Activated CD4-positive, alpha-beta T cell treated with anti-CD3 and anti-CD28 coated beads, Interleukin-2, amount 10 ng/mL, durations not matched to agents 24 days and 14 days (primary cell): ENCODE measurements at regions of chr15 and their contacts with region 1.

Region 1: GRCh38 chr15:67839929-67840748 is at the start of gene RNU6-1:
- DNase-seq: peak; percentile 99
- H3K4me3 Mint-ChIP-seq: peak within 1 kb of the TSS; percentile 95
- H3K27ac Mint-ChIP-seq: peak within 1 kb of the TSS; percentile 98
- H3K4me1 Mint-ChIP-seq: peaks cover 27% of the 10 kb centered on the region
- H3K27me3 Mint-ChIP-seq: peaks cover 35% of the 10 kb centered on the region
- total RNA-seq, gene RNU6-1: not detected in 2 replicates

Region 2: DNA sequence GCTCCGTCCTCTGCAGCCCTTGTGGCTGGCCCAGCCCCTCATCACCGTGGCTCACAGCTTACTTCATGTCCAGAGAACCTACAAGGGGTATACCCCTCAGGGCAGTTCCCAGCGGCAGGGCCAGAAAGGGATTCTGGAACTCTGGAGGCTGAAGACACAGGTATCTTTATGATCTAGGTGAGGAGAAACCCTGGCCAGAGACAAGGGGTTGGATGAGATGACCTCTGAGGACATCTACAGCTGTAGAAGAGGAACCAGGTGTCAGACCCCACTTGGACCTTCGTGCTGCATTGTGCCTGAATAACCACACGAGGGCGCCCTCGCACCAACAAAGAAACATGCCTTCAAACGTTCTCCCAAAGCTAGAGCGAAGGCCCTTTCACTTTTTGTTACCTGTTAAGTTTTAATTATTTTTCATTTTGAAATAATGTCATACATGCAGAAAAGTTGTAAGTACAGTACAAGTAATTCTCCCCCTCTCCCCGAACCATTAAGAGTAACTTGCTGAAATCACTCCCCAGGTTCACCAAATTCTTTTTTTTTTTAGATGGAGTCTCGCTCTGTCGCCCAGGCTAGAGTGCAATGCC is 893.5 kb before region 1 on chr15:
- intact Hi-C with region 1: loop called (anchors 2 kb)
- DNase-seq: peak; percentile 92
- H3K4me3 Mint-ChIP-seq: no peak overlapping the region
- H3K27ac Mint-ChIP-seq: no peak overlapping the region
- H3K4me1 Mint-ChIP-seq: peaks cover 12% of the 10 kb centered on the region
- H3K27me3 Mint-ChIP-seq: peaks cover 6% of the 10 kb centered on the region

Region 3: GRCh38 chr15:67456677-67457529 is 383.2 kb before region 1 on chr15:
- intact Hi-C with region 1: loop called (anchors 1 kb)
- DNase-seq: peak; percentile 95
- H3K4me3 Mint-ChIP-seq: no peak overlapping the region
- H3K27ac Mint-ChIP-seq: no peak overlapping the region
- H3K4me1 Mint-ChIP-seq: no peaks in the 10 kb centered on the region
- H3K27me3 Mint-ChIP-seq: peaks cover 27% of the 10 kb centered on the region

Region 4: DNA sequence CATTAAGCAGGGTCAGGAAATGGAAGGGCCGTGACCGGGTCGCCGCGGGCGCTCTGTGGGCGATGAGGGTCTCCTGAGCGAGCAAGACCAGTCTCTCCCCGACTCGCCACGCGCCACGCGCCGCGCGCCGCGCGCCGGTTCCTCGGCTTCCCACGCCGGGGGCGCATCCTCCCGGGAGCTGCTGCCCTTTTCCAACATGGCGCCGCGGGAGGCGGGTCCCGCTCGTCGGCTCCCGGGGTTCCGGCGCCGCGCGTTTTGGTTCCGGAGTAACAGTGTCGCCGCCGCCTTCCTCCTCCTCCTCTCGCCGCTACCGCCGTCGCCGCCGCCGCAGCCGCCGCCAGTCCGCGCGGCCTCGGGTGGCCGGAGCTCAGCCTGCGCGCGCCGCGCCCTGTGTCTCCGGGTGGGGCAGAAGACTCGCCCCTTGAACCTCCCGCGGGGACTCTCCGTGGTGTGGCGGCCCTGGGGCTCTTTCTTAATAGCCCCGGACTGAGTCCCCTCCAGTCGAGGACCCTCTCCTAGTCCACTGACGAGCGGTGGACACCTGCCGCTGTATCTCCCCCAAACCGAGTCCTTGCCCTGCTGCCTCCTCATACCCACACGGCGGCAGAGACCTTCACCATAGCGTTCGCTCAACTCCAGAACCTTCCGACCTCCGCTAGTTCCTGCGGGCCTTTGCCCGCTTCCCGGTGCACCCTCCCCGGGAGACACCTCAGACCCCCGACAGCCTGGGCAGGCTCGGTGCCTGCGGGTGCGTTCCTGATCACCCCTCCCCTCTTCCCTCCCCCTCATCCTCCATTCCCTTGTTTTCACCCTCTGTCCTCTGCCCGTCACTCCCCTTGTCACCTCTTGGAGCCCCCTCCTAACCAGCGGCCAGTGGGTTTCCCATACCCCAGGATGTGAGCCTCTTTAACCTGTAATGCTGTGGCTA is 297.5 kb before region 1 on chr15 and contains the start of gene MAP2K5:
- intact Hi-C with region 1: loop called (anchors 2 kb)
- DNase-seq: peak; percentile 97
- H3K4me3 Mint-ChIP-seq: peak within 1 kb of the TSS; percentile 94
- H3K27ac Mint-ChIP-seq: peak within 1 kb of the TSS; percentile 92
- H3K4me1 Mint-ChIP-seq: peaks cover 45% of the 10 kb centered on the region
- H3K27me3 Mint-ChIP-seq: no peaks in the 10 kb centered on the region
- total RNA-seq, gene MAP2K5: 21.0 and 25.1 TPM in 2 replicates

Region 5: GRCh38 chr15:67771189-67771800 is 68.8 kb before region 1 on chr15:
- intact Hi-C with region 1: no loop called
- DNase-seq: no peak
- H3K4me3 Mint-ChIP-seq: no peak overlapping the region
- H3K27ac Mint-ChIP-seq: no peak overlapping the region
- H3K4me1 Mint-ChIP-seq: no peaks in the 10 kb centered on the region
- H3K27me3 Mint-ChIP-seq: no peaks in the 10 kb centered on the region

Region 6: DNA sequence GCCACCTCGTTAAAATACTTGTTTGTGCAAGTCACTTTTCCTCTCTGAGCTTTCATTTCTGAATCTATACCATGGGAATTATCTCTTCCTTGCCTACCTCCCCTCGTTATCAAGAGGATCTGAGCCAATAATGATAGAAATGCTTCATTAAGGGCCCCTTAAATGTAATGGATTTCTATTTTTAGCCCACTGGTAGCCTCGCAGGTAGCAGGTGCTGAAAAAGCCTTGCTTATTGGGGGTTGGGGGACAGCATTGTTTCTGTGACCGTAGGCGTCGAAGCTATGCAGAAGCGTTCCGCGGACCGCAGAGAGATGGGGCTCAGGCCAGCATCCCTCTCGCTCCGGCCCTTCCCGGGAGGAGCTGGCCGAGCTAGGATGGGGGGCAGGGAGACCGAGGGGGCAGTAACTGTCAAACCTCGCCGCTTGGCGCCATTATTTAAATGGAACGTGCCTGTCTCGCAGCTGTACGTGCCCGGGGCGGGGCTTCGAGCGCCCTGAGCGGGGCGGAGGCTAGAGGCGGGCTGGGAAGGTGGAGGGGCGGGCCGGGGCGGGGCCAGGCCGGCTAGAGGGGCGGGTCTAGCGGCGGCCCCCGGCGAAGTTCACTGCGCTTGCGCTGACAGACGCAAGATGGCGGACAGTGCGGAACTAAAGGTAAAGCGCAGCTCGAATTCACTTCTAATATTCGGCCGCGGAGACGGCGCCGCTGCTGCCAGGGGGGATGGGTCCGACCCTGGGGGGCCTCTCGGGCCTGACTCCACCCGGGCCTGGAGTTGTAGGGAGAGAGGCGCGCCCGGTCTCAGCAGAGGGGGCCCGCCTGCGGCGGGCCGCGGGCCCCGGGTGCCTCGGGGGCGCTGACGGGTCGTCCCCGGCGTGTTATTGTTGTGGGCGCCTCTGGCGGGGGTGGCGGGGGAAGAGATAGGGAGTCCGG is 213.8 kb after region 1 on chr15 and contains the start of gene PIAS1:
- intact Hi-C with region 1: loop called (anchors 5 kb)
- DNase-seq: peak; percentile 98
- H3K4me3 Mint-ChIP-seq: peak within 1 kb of the TSS; percentile 93
- H3K27ac Mint-ChIP-seq: peak within 1 kb of the TSS; percentile 94
- H3K4me1 Mint-ChIP-seq: peaks cover 32% of the 10 kb centered on the region
- H3K27me3 Mint-ChIP-seq: peaks cover 7% of the 10 kb centered on the region
- total RNA-seq, gene PIAS1: 27.8 and 29.4 TPM in 2 replicates